Activated T-helper 1 cell treated with anti-CD3 and anti-CD28 coated beads, Interleukin-12 subunit alpha, Interleukin-12 subunit beta, Interleukin-2, Interleukin-4 antibody, amounts not matched to agents 30 ng/mL and 10 ng/mL and 1 ng/mL, durations not matched to agents 14 hours and 24 hours and 36 hours (primary cell): ENCODE measurements at regions of chr19 and their contacts with region 1.

Region 1: DNA sequence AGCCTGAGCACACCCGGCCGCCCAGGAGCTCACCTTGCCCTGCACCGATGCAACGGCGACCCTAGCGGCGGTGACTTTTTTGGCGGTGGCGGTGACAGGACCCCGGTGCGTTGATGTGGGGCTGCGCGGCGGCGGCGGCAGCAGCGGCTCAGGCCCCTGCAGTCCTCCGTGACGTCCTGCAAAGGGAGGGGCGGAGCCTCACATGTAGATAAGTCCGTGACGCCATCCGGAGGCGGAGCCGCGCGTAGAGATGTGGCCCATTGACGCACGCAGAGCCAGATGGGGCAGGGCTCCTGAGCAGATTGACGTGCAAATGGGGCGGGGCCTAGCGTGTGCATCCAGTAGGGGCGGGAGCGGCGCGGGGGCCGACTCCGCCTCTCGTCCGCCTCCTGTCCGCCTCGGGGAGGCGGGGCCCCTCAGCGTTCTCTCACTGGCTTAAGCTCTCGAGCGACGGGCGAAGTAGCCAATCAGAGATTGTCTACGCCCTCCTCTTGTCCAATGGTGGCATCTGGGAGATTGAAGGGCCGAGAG is at the start of gene RAB3A:
- DNase-seq: peak; percentile 99
- H3K4me3 Mint-ChIP-seq: peak within 1 kb of the TSS; percentile 95
- H3K27ac Mint-ChIP-seq: peak within 1 kb of the TSS; percentile 86
- H3K4me1 Mint-ChIP-seq: peaks cover 18% of the 10 kb centered on the region
- H3K27me3 Mint-ChIP-seq: peaks cover 4% of the 10 kb centered on the region
- total RNA-seq, gene RAB3A: 7.2 and 11.0 TPM in 2 replicates

Region 2: GRCh38 chr19:18152444-18152816 is 51.5 kb before region 1 on chr19:
- intact Hi-C with region 1: loop called (anchors 2 kb)
- DNase-seq: peak; percentile 95
- H3K4me3 Mint-ChIP-seq: peak overlapping the region; percentile 84
- H3K27ac Mint-ChIP-seq: peak overlapping the region; percentile 96
- H3K4me1 Mint-ChIP-seq: peaks cover 23% of the 10 kb centered on the region
- H3K27me3 Mint-ChIP-seq: peaks cover 3% of the 10 kb centered on the region

Region 3: DNA sequence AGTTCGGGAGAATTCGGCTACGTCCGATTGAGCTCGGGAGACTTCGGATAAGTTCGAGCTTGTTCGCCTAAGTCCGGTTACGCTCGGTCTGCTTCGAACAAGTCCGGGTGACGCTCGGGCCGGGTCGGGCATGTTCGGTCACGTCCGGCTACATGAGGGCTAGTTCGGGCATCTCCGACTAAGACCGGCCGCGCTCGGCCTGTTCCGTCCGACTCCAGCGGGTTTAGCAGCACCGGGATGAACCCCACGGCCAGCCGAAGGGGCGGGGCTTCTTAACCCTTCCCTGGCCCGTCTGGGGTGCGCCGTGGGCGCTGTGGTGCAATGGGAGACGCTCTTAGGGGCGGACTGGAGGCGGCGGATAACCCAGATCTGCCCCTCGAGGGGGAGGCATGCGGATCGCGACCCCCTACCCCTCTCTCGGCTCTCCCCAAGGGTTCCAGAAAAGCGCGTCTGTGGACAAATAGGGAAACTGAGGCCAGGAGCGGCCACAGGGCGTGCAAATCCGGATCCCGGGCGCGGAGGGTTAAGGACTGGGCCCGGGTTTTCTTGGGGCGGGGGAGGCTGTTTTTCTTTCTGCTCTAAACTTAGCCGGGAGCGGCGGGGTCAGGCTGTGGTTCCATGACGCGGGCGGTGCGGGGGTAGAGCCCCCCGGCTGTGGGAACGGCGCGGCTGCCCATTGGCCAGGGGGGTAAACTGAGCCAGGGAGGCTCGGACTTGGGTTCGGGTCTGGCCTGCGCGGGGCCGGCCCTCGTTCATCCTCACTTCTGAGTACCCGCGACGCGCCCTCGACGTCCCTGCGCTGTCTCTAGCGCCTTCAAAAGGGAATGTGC is 20.8 kb after region 1 on chr19:
- intact Hi-C with region 1: loop called (anchors 1 kb)
- DNase-seq: peak; percentile 86
- H3K4me3 Mint-ChIP-seq: peak overlapping the region; percentile 87
- H3K27ac Mint-ChIP-seq: peak overlapping the region; percentile 76
- H3K4me1 Mint-ChIP-seq: peaks cover 9% of the 10 kb centered on the region
- H3K27me3 Mint-ChIP-seq: peaks cover 52% of the 10 kb centered on the region

Region 4: GRCh38 chr19:18281082-18282020 is 77.4 kb after region 1 on chr19 and contains the start of gene JUND:
- intact Hi-C with region 1: loop called (anchors 1 kb)
- DNase-seq: peak; percentile 98
- H3K4me3 Mint-ChIP-seq: peak within 1 kb of the TSS; percentile 88
- H3K27ac Mint-ChIP-seq: peak within 1 kb of the TSS; percentile 98
- H3K4me1 Mint-ChIP-seq: peaks cover 49% of the 10 kb centered on the region
- H3K27me3 Mint-ChIP-seq: no peaks in the 10 kb centered on the region
- total RNA-seq, gene JUND: 431 and 455 TPM in 2 replicates

Region 5: DNA sequence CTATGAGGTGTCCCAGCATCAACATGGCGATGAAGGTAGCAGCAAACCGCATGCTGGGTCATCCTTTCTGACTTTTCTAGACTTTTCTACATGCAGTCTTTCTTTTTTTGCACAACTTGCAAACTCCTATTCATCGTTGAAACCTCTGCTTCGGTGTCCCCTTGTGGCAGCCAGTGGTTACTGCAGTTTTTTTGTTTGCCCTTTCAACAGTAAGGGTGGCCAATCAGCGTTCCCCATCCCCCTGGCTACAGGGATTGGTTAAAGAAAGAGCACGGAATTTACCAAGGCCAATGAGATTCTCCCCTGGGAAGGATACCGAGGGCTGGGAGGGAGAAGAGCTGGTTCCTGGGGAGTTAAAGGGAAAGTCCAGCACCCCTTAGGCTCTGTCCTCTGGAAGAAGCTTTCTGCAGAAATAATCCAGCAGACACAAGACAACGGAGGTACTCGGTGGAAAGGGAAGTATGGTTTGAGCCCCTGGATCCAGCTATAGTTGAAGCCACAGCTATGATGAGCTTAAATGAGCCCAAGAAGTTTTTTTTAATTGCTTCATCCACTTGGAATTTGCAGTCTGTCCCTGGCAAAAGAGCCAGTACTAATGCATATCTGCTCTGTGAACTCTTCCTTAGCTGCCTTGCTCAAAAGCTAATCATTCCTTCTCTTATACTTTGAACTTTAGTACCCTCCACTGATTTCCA is 124.6 kb after region 1 on chr19:
- intact Hi-C with region 1: loop called (anchors 1 kb)
- DNase-seq: peak; percentile 86
- H3K4me3 Mint-ChIP-seq: peak overlapping the region; percentile 31
- H3K27ac Mint-ChIP-seq: peak overlapping the region; percentile 63
- H3K4me1 Mint-ChIP-seq: peaks cover 19% of the 10 kb centered on the region
- H3K27me3 Mint-ChIP-seq: no peaks in the 10 kb centered on the region

Region 6: GRCh38 chr19:18388100-18388959 is 184.4 kb after region 1 on chr19:
- intact Hi-C with region 1: loop called (anchors 5 kb)
- DNase-seq: peak; percentile 77
- H3K4me3 Mint-ChIP-seq: peak overlapping the region; percentile 61
- H3K27ac Mint-ChIP-seq: no peak overlapping the region
- H3K4me1 Mint-ChIP-seq: peaks cover 5% of the 10 kb centered on the region
- H3K27me3 Mint-ChIP-seq: peaks cover 57% of the 10 kb centered on the region